Sciatic nerve (tissue), 2 donors: ENCODE measurements at regions of chr16 and their contacts with region 1.

Region 1: DNA sequence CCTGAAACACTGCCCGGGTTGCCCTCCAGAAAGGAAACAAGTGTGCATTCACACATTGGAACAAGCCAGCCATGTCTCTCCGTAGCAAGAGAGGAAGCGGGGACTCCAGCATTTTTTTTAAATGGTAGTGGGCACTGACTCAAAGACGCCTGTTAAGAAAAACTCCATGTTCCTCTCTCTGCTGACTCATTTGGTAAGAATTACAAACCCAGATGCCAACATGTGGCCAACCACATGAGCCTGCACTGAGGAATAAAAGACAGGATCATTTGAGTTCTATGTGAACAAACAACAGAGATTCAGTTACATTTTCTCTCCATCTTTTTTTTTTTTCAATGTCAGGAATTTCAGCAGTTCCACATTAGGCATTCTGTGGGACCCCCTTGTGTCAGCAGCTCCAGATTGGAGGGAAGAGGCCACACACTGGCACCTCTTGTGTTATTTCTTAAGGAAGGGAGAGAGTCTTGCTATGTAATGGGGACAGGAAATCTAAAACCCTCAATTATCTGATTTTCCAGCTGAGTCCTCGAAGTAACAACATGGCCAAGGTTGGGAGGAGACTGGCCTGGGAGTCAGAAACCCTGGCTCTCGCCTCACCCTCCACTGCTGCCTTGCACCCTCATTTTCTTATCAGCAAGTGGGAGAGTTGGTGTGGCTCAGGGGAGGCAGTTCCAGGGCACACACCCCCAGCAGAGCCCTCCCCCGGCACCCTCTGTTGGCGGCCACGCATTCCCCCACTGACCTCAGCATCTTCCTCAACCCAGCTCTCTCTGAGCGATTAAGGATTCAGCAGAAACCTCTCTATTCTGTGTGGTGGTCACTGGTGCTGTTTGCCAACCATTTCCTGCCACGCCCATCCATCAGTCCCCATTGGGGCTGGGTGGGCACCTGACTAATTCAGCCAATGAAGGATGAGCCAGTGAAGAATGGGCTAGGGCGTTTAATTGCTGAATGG is 173.0 kb downstream of the FOXL1 start:
- DNase-seq: no peak
- ATAC-seq: no peak

Region 2: DNA sequence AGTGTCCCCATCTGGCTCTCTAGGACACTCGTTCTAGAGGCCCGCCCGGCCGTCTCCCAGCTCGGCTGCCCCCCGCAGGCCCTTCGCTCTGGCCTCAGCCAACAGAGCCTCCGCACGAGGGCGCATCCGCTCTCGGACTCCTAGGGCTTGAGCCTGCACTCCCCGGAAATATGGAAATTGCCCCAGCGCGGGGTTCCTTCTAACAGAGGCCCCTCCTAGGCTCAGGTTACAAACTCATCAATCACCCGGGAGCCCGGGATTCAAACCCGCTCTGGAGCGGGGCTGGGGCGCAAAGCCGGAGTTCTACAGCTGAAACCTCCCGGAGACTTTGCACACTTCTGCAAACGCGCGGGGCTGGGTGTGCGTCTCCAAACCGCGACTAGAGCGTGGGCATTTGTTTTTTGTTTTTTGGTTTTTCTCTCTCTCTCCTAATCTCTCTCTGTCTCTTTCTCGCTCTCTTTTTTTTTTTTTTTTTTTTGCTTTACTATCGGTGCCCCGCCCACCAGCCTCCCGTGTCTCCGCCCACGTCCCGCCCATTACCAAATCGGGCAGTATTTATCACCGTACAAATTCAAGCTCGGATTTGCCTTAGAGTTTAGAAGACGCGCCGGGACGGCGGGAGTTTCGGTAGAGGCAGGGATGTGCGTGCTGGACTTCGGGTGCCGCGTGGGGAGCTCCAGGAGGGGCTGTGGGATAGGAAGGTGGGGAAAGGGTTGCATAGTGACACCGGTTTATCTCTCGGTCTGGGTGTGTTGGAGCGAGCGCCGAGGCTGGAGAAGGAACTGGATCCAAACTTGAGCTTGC is 175.4 kb before region 1 on chr16:
- intact Hi-C with region 1: loop called (anchors 10 kb)
- DNase-seq: peak; percentile 91
- ATAC-seq: peak; percentile 88

Region 3: GRCh38 chr16:86718118-86718517 is 33.2 kb before region 1 on chr16:
- intact Hi-C with region 1: no loop called
- DNase-seq: no peak
- ATAC-seq: no peak

Region 4: GRCh38 chr16:87437911-87438610 is 686.7 kb after region 1 on chr16:
- intact Hi-C with region 1: no loop called
- DNase-seq: no peak
- ATAC-seq: no peak